ENCODE measurements at regions of chr17 and their contacts with region 1.

Region 1: DNA sequence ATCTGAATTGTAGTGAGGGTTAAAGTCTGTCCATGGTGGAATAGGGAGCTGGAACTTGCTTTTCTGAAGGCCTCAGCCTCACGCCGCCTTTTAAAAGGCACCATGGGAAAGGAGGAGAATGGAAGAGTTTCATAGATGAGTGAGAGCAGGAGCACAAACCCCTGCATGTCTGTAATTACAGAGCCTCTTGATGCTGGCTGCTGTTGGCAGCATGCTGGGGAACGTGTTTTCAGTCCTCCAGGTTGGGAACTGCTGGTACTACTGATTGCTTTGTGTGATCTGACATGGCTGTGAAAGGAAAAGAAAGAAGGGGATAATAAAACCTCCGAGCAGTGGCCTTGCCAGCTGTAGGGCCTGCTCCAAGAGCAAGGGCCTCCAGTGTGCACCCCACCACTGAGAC is 16.8 kb upstream of the DYNLL2 start:
- DNase-seq: no peak
- ATAC-seq: no peak
- H3K4me3 ChIP-seq: no peak overlapping the region
- H3K4me3 Mint-ChIP-seq: no peak overlapping the region
- H3K27ac ChIP-seq: no peak overlapping the region
- H3K27ac Mint-ChIP-seq: no peak overlapping the region
- H3K4me1 ChIP-seq: no peaks in the 10 kb centered on the region
- H3K4me1 Mint-ChIP-seq: no peaks in the 10 kb centered on the region
- H3K27me3 ChIP-seq: peaks cover 7 to 11% of the 10 kb centered on the region in 2 experiments
- H3K27me3 Mint-ChIP-seq: peaks cover 17% of the 10 kb centered on the region
- CTCF ChIP-seq: no peak

Region 2: DNA sequence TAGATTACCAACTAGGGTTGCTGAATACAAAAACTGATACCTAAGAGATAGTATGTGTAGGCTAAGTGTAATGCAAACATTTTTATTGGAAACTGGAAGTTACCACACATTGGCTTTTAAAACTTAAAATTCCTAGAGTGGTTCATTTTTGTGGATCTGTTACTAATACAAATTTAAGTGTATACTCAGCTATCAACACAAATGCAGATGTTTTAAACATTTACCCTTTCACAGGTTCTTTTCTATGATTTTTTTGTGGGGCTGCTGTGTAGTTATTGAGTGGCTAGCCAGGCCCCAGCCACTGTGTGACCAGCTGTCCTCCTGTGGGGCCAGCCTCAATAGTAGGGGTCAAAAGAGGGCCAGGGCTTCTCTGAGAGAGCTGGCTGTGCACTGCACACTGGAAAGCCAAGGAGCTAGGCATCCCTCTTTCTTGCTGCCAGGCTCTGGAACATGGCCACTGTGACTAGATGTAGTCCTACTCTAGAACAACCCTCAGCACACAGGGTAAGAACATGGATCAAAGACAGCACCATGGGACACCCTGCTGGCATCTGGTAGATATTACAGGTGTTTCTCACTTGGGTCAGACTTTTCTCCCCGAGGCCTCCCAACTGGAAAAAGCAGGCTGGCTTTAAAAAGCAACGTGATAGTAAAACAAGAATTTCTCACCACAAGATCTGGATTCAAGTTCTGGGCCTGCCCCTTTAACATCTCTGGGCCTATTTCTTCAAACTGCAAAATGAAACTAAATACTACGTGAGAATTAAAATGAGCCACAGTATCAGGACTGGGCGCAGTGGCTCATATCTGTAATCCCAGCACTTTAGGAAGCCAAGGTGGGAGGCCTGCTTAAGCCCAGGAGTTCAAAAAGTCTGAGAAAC is 71.1 kb before region 1 on chr17:
- CTCF ChIA-PET with region 1: no interaction called
- POLR2A ChIA-PET with region 1: no interaction called
- intact Hi-C with region 1: no loop called
- DNase-seq: peak; percentile 27 to 81 (median 41)
- ATAC-seq: peak; percentile 89
- H3K4me3 ChIP-seq: no peak overlapping the region
- H3K4me3 Mint-ChIP-seq: peak overlapping the region; percentile 25
- H3K27ac ChIP-seq: peak overlapping the region; percentile 9 to 12
- H3K27ac Mint-ChIP-seq: peak overlapping the region; percentile 37
- H3K4me1 ChIP-seq: peaks cover 15% of the 10 kb centered on the region
- H3K4me1 Mint-ChIP-seq: peaks cover 56% of the 10 kb centered on the region
- H3K27me3 ChIP-seq: no peaks in the 10 kb centered on the region
- H3K27me3 Mint-ChIP-seq: no peaks in the 10 kb centered on the region
- CTCF ChIP-seq: peak; percentile 73

Region 3: GRCh38 chr17:58019039-58019438 is 47.4 kb before region 1 on chr17:
- CTCF ChIA-PET with region 1: no interaction called
- POLR2A ChIA-PET with region 1: no interaction called
- intact Hi-C with region 1: loop called in 1 of 2 experiments (anchors 5 kb)
- DNase-seq: no peak
- ATAC-seq: no peak
- H3K4me3 ChIP-seq: no peak overlapping the region
- H3K4me3 Mint-ChIP-seq: no peak overlapping the region
- H3K27ac ChIP-seq: no peak overlapping the region
- H3K27ac Mint-ChIP-seq: no peak overlapping the region
- H3K4me1 ChIP-seq: no peaks in the 10 kb centered on the region
- H3K4me1 Mint-ChIP-seq: no peaks in the 10 kb centered on the region
- H3K27me3 ChIP-seq: peaks cover 2 to 10% of the 10 kb centered on the region in 2 experiments
- H3K27me3 Mint-ChIP-seq: peaks cover 35% of the 10 kb centered on the region
- CTCF ChIP-seq: no peak

Region 4: GRCh38 chr17:58105093-58105492 is 38.7 kb after region 1 on chr17:
- CTCF ChIA-PET with region 1: no interaction called
- POLR2A ChIA-PET with region 1: no interaction called
- intact Hi-C with region 1: loop called in 1 of 2 experiments (anchors 2 kb)
- DNase-seq: no peak
- ATAC-seq: no peak
- H3K4me3 ChIP-seq: no peak overlapping the region
- H3K4me3 Mint-ChIP-seq: no peak overlapping the region
- H3K27ac ChIP-seq: no peak overlapping the region
- H3K27ac Mint-ChIP-seq: no peak overlapping the region
- H3K4me1 ChIP-seq: no peaks in the 10 kb centered on the region
- H3K4me1 Mint-ChIP-seq: no peaks in the 10 kb centered on the region
- H3K27me3 ChIP-seq: no peaks in the 10 kb centered on the region
- H3K27me3 Mint-ChIP-seq: no peaks in the 10 kb centered on the region
- CTCF ChIP-seq: no peak

Region 5: GRCh38 chr17:58210922-58211321 is 144.5 kb after region 1 on chr17:
- CTCF ChIA-PET with region 1: no interaction called
- POLR2A ChIA-PET with region 1: no interaction called
- intact Hi-C with region 1: no loop called
- DNase-seq: no peak
- ATAC-seq: no peak
- H3K4me3 ChIP-seq: no peak overlapping the region
- H3K4me3 Mint-ChIP-seq: no peak overlapping the region
- H3K27ac ChIP-seq: no peak overlapping the region
- H3K27ac Mint-ChIP-seq: no peak overlapping the region
- H3K4me1 ChIP-seq: no peaks in the 10 kb centered on the region
- H3K4me1 Mint-ChIP-seq: no peaks in the 10 kb centered on the region
- H3K27me3 ChIP-seq: no peaks in the 10 kb centered on the region
- H3K27me3 Mint-ChIP-seq: no peaks in the 10 kb centered on the region
- CTCF ChIP-seq: no peak

Measured in CD4-positive, alpha-beta T cell (primary cell).